Endothelial cell of umbilical vein (primary cell): ENCODE measurements at regions of chr14 and their contacts with region 1.

Region 1: GRCh38 chr14:78933948-78934524 is 763.9 kb downstream of the NRXN3 start:
- DNase-seq: peak; percentile 54
- H3K4me3 ChIP-seq: no peak overlapping the region
- H3K27ac ChIP-seq: no peak overlapping the region
- H3K4me1 ChIP-seq: peaks cover 8% of the 10 kb centered on the region
- H3K27me3 ChIP-seq: no peaks in the 10 kb centered on the region
- CTCF ChIP-seq: peak; percentile 37 to 42
- POLR2A ChIP-seq: no peak

Region 2: GRCh38 chr14:78834766-78835451 is 99.1 kb before region 1 on chr14:
- CTCF ChIA-PET with region 1: no interaction called
- POLR2A ChIA-PET with region 1: no interaction called
- dilution Hi-C with region 1: no loop called
- intact Hi-C with region 1: no loop called
- DNase-seq: no peak
- H3K4me3 ChIP-seq: no peak overlapping the region
- H3K27ac ChIP-seq: no peak overlapping the region
- H3K4me1 ChIP-seq: no peaks in the 10 kb centered on the region
- H3K27me3 ChIP-seq: peaks cover 0 to 4% of the 10 kb centered on the region in 2 experiments
- CTCF ChIP-seq: no peak
- POLR2A ChIP-seq: no peak

Region 3: DNA sequence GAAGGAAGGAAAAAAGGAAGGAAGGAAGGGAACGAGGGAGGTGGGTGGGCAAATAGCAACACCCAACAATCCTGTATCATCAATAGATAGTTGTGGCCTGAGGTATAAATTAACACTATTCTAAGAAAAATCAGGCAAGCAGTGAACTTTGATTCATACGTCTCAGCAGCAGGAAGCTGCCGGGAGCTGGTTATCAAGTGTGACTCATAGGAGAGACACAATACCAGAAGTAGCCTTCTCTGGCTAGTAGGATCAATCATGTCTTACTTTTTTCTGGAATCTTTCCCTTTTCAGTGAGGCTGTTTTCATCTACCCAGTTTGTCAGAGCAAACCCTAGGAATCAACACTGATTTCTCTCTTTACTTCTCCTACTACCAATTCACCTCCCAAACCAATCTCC is 16.6 kb after region 1 on chr14:
- CTCF ChIA-PET with region 1: interaction called, 41 read pairs
- POLR2A ChIA-PET with region 1: no interaction called
- dilution Hi-C with region 1: no loop called
- intact Hi-C with region 1: no loop called
- DNase-seq: peak; percentile 74
- H3K4me3 ChIP-seq: no peak overlapping the region
- H3K27ac ChIP-seq: peak overlapping the region; percentile 52
- H3K4me1 ChIP-seq: peaks cover 14% of the 10 kb centered on the region
- H3K27me3 ChIP-seq: no peaks in the 10 kb centered on the region
- CTCF ChIP-seq: no peak
- POLR2A ChIP-seq: no peak

Region 4: GRCh38 chr14:78967110-78967809 is 33.2 kb after region 1 on chr14:
- CTCF ChIA-PET with region 1: interaction called, 30 read pairs
- POLR2A ChIA-PET with region 1: no interaction called
- dilution Hi-C with region 1: no loop called
- intact Hi-C with region 1: no loop called
- DNase-seq: peak; percentile 56
- H3K4me3 ChIP-seq: no peak overlapping the region
- H3K27ac ChIP-seq: peak overlapping the region; percentile 60
- H3K4me1 ChIP-seq: peaks cover 33% of the 10 kb centered on the region
- H3K27me3 ChIP-seq: no peaks in the 10 kb centered on the region
- CTCF ChIP-seq: no peak
- POLR2A ChIP-seq: no peak

Region 5: DNA sequence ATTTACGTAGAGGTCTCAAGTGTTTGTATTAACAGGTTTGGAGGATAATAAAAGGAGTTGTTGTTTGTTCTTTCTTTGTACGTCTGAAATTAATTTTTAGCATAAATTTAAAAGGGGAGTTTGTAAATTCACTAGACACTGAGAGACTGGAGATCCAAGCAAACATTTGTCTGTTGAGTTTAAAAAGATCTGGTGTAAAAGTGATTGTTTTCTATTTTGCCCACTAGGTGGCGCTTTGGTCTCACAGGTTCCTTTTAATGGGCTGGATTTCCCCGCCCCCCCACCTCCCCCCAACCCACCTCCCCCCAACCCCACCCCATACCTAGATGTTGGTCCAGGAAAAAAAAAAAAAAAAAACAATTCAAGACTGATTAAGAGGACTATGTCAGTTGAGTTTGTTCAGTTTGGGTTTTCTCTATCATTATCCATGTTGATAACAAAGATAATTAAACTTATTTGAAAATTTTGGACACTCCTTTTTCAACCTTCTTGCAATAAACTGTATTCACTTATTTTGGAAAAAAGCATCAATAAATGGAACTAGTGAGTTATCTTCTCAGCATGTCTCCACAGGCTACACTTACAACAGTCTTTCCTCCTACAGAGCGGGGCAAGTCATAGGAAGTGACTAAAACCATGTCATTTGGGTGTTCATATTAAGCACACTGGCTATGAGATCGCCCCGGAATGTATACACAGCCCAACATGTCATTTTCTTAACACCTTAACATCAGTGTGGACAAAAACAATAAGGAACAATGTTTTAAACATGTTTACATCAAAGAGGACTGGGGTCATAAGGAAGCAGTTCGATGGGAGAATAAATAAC is 77.3 kb after region 1 on chr14:
- CTCF ChIA-PET with region 1: interaction called, 12 read pairs
- POLR2A ChIA-PET with region 1: no interaction called
- dilution Hi-C with region 1: no loop called
- intact Hi-C with region 1: no loop called
- DNase-seq: peak; percentile 76
- H3K4me3 ChIP-seq: no peak overlapping the region
- H3K27ac ChIP-seq: peak overlapping the region; percentile 63
- H3K4me1 ChIP-seq: peaks cover 11% of the 10 kb centered on the region
- H3K27me3 ChIP-seq: no peaks in the 10 kb centered on the region
- CTCF ChIP-seq: peak in 1 of 2 donors; percentile 42
- POLR2A ChIP-seq: no peak

Region 6: DNA sequence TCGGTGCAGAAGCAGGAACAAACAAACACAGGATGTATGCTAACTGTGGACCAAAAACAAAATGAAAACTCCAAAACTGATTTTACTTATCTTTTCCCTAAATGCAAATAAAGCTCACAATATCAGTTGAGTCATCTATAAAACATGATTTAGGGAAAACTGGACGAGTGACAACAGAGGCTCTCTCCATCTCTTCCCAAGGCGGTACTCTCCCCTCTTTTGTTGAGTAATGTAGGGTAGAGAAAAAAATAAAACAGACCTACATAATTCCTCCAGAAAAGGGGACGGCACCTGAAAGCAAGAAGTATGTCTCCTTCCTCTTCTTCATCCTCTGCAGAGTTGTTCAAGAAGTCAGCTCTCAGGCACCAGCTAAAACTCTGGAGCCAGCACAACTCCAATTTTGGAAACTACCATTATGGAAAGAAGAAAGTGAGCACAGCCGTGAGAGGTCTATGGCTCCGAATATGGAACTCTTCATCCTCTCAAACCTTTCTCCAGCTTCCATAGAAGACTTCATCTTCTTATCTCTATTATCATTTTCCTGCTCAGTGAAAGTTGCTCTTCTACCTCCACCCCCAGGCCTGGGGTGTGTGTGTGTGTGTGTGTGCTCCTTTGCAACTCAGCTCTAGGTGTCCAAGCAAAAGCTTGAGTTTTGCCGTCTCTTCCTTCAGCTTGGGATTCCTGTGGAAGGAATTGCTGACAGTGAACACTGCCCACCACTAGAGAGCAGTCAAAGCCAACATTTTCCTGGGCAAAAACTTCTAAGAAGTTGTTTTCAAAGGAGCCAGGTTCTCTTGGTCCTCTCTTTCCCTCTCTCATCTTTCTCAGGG is 1121.8 kb after region 1 on chr14:
- CTCF ChIA-PET with region 1: interaction called, 27 read pairs
- POLR2A ChIA-PET with region 1: no interaction called
- dilution Hi-C with region 1: no loop called
- intact Hi-C with region 1: loop called (anchors 1 kb)
- DNase-seq: peak; percentile 47
- H3K4me3 ChIP-seq: no peak overlapping the region
- H3K27ac ChIP-seq: no peak overlapping the region
- H3K4me1 ChIP-seq: no peaks in the 10 kb centered on the region
- H3K27me3 ChIP-seq: no peaks in the 10 kb centered on the region
- CTCF ChIP-seq: peak; percentile 46 to 61
- POLR2A ChIP-seq: no peak

Region 7: DNA sequence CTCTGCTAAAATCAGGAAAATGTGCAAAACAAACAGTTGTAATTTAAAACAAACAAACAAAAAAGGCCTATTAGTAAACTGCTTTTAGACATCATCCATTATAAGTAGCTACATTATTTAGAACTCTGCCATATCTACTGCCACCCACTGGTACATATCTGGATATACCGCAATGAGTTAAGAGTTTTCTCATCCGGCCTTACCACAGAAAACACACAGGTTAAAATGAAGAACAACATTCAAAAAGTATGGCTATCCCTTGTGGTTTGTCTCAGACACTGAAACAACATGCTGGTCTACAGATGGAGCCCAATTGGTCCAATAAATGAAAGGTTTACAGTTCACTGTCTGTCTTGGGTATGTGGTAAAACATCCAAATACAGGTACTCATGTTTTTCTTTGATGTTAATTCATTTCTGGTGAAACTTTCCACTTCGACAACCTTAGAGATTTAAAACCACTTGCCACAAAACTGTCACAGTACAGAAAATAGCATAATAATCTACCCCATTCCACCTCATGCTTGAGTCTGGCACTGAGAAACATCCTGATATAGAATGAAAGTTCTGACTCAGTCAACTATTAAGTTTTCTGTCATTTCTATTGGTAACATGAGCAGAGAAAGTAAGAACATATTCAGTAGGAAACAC is 1653.2 kb after region 1 on chr14:
- CTCF ChIA-PET with region 1: interaction called, 36 read pairs
- POLR2A ChIA-PET with region 1: no interaction called
- dilution Hi-C with region 1: no loop called
- intact Hi-C with region 1: loop called (anchors 10 kb)
- DNase-seq: peak; percentile 48
- H3K4me3 ChIP-seq: no peak overlapping the region
- H3K27ac ChIP-seq: no peak overlapping the region
- H3K4me1 ChIP-seq: peaks cover 7% of the 10 kb centered on the region
- H3K27me3 ChIP-seq: no peaks in the 10 kb centered on the region
- CTCF ChIP-seq: peak; percentile 40 to 47
- POLR2A ChIP-seq: no peak